ENCODE measurements at regions of chr18 and their contacts with region 1.

Region 1: DNA sequence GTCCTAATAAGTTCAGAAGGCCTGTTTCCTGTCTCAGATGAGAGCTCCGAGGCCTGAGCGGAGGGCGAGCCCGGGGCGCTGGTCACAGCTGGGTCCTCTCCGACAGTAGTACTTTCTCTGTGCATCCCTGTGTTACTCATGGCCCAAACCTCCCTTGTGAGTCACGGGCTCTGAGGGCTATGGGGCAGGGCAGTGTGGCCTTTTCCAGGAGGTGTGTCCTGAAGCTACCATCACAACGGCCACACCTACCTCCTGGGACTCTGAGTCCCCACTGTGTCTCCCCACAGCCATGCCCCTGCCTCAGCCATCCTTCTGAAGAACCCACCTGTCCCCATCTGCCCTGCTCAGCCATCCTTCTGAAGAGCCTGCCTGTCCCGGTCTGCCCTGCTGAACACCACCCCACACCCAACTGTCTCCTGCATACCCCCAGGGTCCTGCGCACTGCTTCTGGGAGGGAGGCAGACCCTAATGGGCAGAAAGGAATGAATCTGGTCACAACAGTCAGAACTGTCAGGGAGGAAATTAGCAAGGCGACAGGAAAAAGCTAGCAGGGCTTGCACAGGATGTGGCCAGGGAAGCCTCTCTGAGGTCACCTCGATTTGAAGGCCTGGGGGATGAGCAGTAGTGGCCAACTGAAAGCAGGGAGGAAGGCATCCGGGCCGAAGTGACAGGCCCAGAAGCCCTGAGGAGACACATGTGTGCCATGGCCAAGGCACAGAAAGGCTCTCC is 145.4 kb upstream of the RIOK3 start:
- DNase-seq: peak; percentile 32 to 49
- ATAC-seq: peak; percentile 33 to 61 (median 54)
- H3K4me3 ChIP-seq: no peak overlapping the region
- H3K4me3 Mint-ChIP-seq: peak overlapping the region; percentile 88
- H3K27ac ChIP-seq: peak overlapping the region; percentile 80
- H3K27ac Mint-ChIP-seq: peak overlapping the region; percentile 86 to 97
- H3K4me1 ChIP-seq: peaks cover 40% of the 10 kb centered on the region
- H3K4me1 Mint-ChIP-seq: peaks cover 54 to 56% of the 10 kb centered on the region in 2 donors
- H3K27me3 ChIP-seq: no peaks in the 10 kb centered on the region
- H3K27me3 Mint-ChIP-seq: peaks cover 0 to 4% of the 10 kb centered on the region in 2 donors
- CTCF ChIP-seq: no peak

Region 2: GRCh38 chr18:23071285-23071684 is 236.4 kb before region 1 on chr18:
- intact Hi-C with region 1: loop called (anchors 1 kb)
- DNase-seq: peak; percentile 81 to 94
- ATAC-seq: peak; percentile 90 to 96 (median 96)
- H3K4me3 ChIP-seq: no peak overlapping the region
- H3K4me3 Mint-ChIP-seq: peak overlapping the region; percentile 89
- H3K27ac ChIP-seq: peak overlapping the region; percentile 63
- H3K27ac Mint-ChIP-seq: peak overlapping the region; percentile 84 to 86
- H3K4me1 ChIP-seq: peaks cover 59% of the 10 kb centered on the region
- H3K4me1 Mint-ChIP-seq: peaks cover 52 to 56% of the 10 kb centered on the region in 2 donors
- H3K27me3 ChIP-seq: no peaks in the 10 kb centered on the region
- H3K27me3 Mint-ChIP-seq: no peaks in the 10 kb centered on the region
- CTCF ChIP-seq: no peak

Region 3: DNA sequence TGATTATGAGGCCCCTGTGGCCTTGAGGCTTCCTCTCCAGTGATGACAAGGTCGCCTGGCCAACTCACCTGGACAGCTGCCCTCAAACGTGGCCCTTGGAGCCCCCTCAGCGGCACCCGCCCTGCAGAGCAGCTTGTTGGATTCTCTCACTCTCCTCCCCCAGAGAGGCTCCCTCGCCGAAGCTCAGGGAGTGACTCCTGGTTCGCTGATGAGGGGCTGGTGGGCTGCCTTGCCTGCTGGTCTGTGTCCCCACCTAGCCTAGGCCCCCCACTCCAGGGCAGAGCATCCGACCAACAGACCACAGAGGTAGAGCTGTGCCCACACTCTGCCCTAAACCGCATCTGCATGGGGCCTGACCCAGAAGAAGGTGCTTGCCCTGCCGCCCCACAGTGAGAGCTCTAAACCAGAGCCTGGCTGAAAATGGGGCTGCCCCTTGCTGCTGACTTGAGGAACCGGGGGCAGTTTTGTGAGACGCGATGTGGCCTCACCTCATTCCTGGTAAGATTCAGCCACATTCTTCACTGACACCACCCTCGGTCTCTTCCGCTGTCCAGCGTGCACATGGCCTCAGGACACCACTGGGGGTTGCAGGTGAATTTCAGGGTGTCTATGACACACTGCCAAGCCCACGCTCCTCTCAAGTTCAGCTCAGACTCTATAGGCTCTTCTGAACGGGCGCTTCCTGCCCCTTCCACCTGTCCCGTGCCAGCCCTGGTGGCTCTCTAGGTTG is 40.8 kb before region 1 on chr18:
- intact Hi-C with region 1: loop called (anchors 5 kb)
- DNase-seq: peak; percentile 9 to 33
- ATAC-seq: peak; percentile 48 to 73 (median 61)
- H3K4me3 ChIP-seq: no peak overlapping the region
- H3K4me3 Mint-ChIP-seq: peak overlapping the region; percentile 32
- H3K27ac ChIP-seq: peak overlapping the region; percentile 59
- H3K27ac Mint-ChIP-seq: peak overlapping the region; percentile 56 to 82
- H3K4me1 ChIP-seq: peaks cover 34% of the 10 kb centered on the region
- H3K4me1 Mint-ChIP-seq: peaks cover 31 to 32% of the 10 kb centered on the region in 2 donors
- H3K27me3 ChIP-seq: no peaks in the 10 kb centered on the region
- H3K27me3 Mint-ChIP-seq: peaks cover 0 to 3% of the 10 kb centered on the region in 2 donors
- CTCF ChIP-seq: no peak

Region 4: DNA sequence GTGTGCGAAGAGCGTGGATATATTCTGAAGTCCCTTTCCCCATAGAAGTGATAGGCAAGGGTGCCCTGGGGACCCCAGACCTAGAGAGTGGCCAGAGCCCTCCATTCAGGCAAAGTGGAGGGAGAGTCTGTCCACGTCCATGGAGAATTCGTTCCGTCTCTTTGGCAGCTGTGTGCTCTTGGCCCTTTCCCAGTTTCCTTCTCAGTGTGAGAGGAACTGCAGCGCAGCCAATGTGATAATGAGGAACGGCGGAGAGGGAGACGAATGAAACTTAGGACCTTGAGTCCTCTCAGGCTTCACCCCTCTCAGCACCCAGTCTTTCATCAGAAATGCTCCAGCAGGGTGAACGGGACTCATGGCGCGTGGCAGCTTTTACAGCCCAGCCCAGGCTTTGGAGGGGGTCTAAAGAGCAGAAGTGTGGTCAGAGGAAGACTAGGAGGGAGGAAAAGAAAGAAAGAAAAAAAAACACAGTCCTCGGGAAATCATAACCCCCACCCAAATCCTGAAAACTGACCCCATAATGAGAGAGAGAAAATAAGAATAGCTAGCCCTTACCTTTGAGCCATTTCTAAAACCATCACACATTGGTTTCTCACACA is 50.4 kb after region 1 on chr18:
- intact Hi-C with region 1: loop called (anchors 1 kb)
- DNase-seq: no peak
- ATAC-seq: peak in 1 of 3 donors; percentile 3
- H3K4me3 ChIP-seq: no peak overlapping the region
- H3K4me3 Mint-ChIP-seq: peak overlapping the region; percentile 76
- H3K27ac ChIP-seq: peak overlapping the region; percentile 30
- H3K27ac Mint-ChIP-seq: peak overlapping the region; percentile 75 to 85
- H3K4me1 ChIP-seq: peaks cover 26% of the 10 kb centered on the region
- H3K4me1 Mint-ChIP-seq: peaks cover 34 to 46% of the 10 kb centered on the region in 2 donors
- H3K27me3 ChIP-seq: no peaks in the 10 kb centered on the region
- H3K27me3 Mint-ChIP-seq: no peaks in the 10 kb centered on the region
- CTCF ChIP-seq: no peak

Region 5: DNA sequence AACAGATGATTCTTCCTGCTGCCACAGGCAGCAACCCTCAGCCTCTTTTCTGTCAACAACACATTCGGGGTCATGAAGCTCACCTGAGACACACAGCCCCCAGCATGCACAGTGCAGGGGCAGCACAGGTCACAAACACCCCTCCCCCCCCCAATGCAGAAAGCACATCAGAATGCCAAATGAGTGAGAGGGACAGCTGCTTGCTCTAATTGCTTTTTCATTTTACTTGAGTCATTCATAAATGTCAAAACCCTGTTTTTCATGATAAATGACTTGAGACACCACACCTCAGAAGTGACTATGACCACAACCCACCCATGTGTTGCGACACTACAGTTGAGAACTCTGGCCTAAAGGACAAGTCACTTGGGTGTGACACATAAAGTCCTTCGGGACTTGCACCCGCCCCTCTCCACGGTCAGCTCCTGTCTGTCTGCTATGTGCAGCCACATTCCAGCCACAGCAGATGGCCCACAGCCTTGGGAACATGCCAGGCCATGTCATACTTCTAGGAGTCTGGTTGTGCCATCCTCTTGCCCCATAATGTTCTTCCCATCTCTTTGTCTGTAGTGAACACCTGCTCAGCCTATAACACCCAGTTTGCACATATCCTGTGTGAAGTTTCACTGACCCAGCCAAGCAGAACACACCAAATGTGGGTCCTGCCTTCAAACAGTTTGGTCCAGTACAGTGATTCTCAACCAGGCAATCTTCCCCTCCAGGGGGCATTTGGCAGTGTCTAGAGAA is 115.1 kb after region 1 on chr18:
- intact Hi-C with region 1: loop called (anchors 5 kb)
- DNase-seq: peak; percentile 47 to 53
- ATAC-seq: peak; percentile 84 to 94 (median 88)
- H3K4me3 ChIP-seq: no peak overlapping the region
- H3K4me3 Mint-ChIP-seq: peak overlapping the region; percentile 92
- H3K27ac ChIP-seq: peak overlapping the region; percentile 60
- H3K27ac Mint-ChIP-seq: peak overlapping the region; percentile 89 to 90
- H3K4me1 ChIP-seq: peaks cover 36% of the 10 kb centered on the region
- H3K4me1 Mint-ChIP-seq: peaks cover 30 to 31% of the 10 kb centered on the region in 2 donors
- H3K27me3 ChIP-seq: no peaks in the 10 kb centered on the region
- H3K27me3 Mint-ChIP-seq: no peaks in the 10 kb centered on the region
- CTCF ChIP-seq: no peak

Region 6: GRCh38 chr18:23640023-23640422 is 332.3 kb after region 1 on chr18:
- intact Hi-C with region 1: no loop called
- DNase-seq: no peak
- ATAC-seq: no peak
- H3K4me3 ChIP-seq: no peak overlapping the region
- H3K4me3 Mint-ChIP-seq: no peak overlapping the region
- H3K27ac ChIP-seq: no peak overlapping the region
- H3K27ac Mint-ChIP-seq: no peak overlapping the region
- H3K4me1 ChIP-seq: no peaks in the 10 kb centered on the region
- H3K4me1 Mint-ChIP-seq: peaks cover 7% of the 10 kb centered on the region in 2 donors
- H3K27me3 ChIP-seq: peaks cover 2% of the 10 kb centered on the region
- H3K27me3 Mint-ChIP-seq: peaks cover 11 to 15% of the 10 kb centered on the region in 2 donors
- CTCF ChIP-seq: no peak

Measured in natural killer cell (primary cell).